Caco-2 (cell line): ENCODE measurements at regions of chr5 and their contacts with region 1.

Region 1: GRCh38 chr5:110045158-110045557 is 355.4 kb downstream of the MAN2A1 start:
- DNase-seq: no peak
- H3K4me3 ChIP-seq: no peak overlapping the region
- H3K4me3 Mint-ChIP-seq: no peak overlapping the region
- H3K27ac Mint-ChIP-seq: no peak overlapping the region
- H3K4me1 ChIP-seq: no peaks in the 10 kb centered on the region
- H3K4me1 Mint-ChIP-seq: no peaks in the 10 kb centered on the region
- H3K27me3 ChIP-seq: no peaks in the 10 kb centered on the region
- H3K27me3 Mint-ChIP-seq: peaks cover 4% of the 10 kb centered on the region
- CTCF ChIP-seq: no peak

Region 2: GRCh38 chr5:110414360-110414759 is 369.2 kb after region 1 on chr5:
- CTCF ChIA-PET with region 1: no interaction called
- POLR2A ChIA-PET with region 1: no interaction called
- intact Hi-C with region 1: loop called (anchors 1 kb)
- DNase-seq: peak in 1 of 2 experiments; percentile 5
- H3K4me3 ChIP-seq: no peak overlapping the region
- H3K4me3 Mint-ChIP-seq: no peak overlapping the region
- H3K27ac Mint-ChIP-seq: no peak overlapping the region
- H3K4me1 ChIP-seq: no peaks in the 10 kb centered on the region
- H3K4me1 Mint-ChIP-seq: no peaks in the 10 kb centered on the region
- H3K27me3 ChIP-seq: no peaks in the 10 kb centered on the region
- H3K27me3 Mint-ChIP-seq: no peaks in the 10 kb centered on the region
- CTCF ChIP-seq: peak in 1 of 2 experiments; percentile 67

Region 3: GRCh38 chr5:110590187-110590586 is 545.0 kb after region 1 on chr5:
- CTCF ChIA-PET with region 1: no interaction called
- POLR2A ChIA-PET with region 1: no interaction called
- intact Hi-C with region 1: loop called (anchors 10 kb)
- DNase-seq: peak in 1 of 2 experiments; percentile 17
- H3K4me3 ChIP-seq: no peak overlapping the region
- H3K4me3 Mint-ChIP-seq: no peak overlapping the region
- H3K27ac Mint-ChIP-seq: no peak overlapping the region
- H3K4me1 ChIP-seq: peaks cover 13% of the 10 kb centered on the region
- H3K4me1 Mint-ChIP-seq: peaks cover 10% of the 10 kb centered on the region
- H3K27me3 ChIP-seq: no peaks in the 10 kb centered on the region; the same call in 1 of the 2 replicates
- H3K27me3 Mint-ChIP-seq: no peaks in the 10 kb centered on the region
- CTCF ChIP-seq: peak; percentile 50 to 63